ENCODE measurements at regions of chr7 and their contacts with region 1.

Region 1: GRCh38 chr7:100119062-100119700 is at the starts of genes CNPY4 and TAF6:
- DNase-seq: peak; percentile 99 to 100 (median 99)
- ATAC-seq: peak; percentile 88
- H3K4me3 ChIP-seq: peak within 1 kb of the TSS; percentile 72
- H3K27ac ChIP-seq: peak within 1 kb of the TSS; percentile 88
- H3K4me1 ChIP-seq: peaks cover 20 to 38% of the 10 kb centered on the region in 2 experiments; a peak in 4 of 5 replicates
- H3K27me3 ChIP-seq: no peaks in the 10 kb centered on the region
- CTCF ChIP-seq: no peak; a peak in 1 of 6 replicates
- EP300 ChIP-seq: no peak; the same call in 1 of the 2 replicates
- POLR2A ChIP-seq: peak; percentile 93
- RAD21 ChIP-seq: no peak
- polyA plus RNA-seq, gene CNPY4: 1.9 to 6.3 TPM
- polyA plus RNA-seq, gene TAF6: 0.78 to 0.83 TPM

Region 2: GRCh38 chr7:101838837-101839483 is 1719.8 kb after region 1 on chr7:
- CTCF ChIA-PET with region 1: no interaction called
- POLR2A ChIA-PET with region 1: no interaction called
- in situ Hi-C with region 1: loop called (anchors 10 kb)
- intact Hi-C with region 1: no loop called
- DNase-seq: no peak
- ATAC-seq: peak; percentile 74
- H3K4me3 ChIP-seq: no peak overlapping the region
- H3K27ac ChIP-seq: no peak overlapping the region
- H3K4me1 ChIP-seq: peaks cover 7 to 23% of the 10 kb centered on the region in 2 experiments; a peak in 2 of 5 replicates
- H3K27me3 ChIP-seq: no peaks in the 10 kb centered on the region
- CTCF ChIP-seq: no peak
- EP300 ChIP-seq: no peak
- POLR2A ChIP-seq: no peak
- RAD21 ChIP-seq: no peak

Measured in K562 (cell line).